Activated T-helper 1 cell treated with anti-CD3 and anti-CD28 coated beads, Interleukin-12 subunit alpha, Interleukin-12 subunit beta, Interleukin-2, Interleukin-4 antibody, amounts not matched to agents 30 ng/mL and 10 ng/mL and 1 ng/mL, durations not matched to agents 14 hours and 24 hours and 36 hours (primary cell): ENCODE measurements at regions of chr2 and their contacts with region 1.

Region 1: GRCh38 chr2:131105156-131105949 is at the start of gene PLEKHB2:
- DNase-seq: peak; percentile 96
- H3K4me3 Mint-ChIP-seq: peak within 1 kb of the TSS; percentile 97
- H3K27ac Mint-ChIP-seq: peak within 1 kb of the TSS; percentile 100
- H3K4me1 Mint-ChIP-seq: peaks cover 35% of the 10 kb centered on the region
- H3K27me3 Mint-ChIP-seq: no peaks in the 10 kb centered on the region
- total RNA-seq, gene PLEKHB2: 72.5 and 73.9 TPM in 2 replicates

Region 2: DNA sequence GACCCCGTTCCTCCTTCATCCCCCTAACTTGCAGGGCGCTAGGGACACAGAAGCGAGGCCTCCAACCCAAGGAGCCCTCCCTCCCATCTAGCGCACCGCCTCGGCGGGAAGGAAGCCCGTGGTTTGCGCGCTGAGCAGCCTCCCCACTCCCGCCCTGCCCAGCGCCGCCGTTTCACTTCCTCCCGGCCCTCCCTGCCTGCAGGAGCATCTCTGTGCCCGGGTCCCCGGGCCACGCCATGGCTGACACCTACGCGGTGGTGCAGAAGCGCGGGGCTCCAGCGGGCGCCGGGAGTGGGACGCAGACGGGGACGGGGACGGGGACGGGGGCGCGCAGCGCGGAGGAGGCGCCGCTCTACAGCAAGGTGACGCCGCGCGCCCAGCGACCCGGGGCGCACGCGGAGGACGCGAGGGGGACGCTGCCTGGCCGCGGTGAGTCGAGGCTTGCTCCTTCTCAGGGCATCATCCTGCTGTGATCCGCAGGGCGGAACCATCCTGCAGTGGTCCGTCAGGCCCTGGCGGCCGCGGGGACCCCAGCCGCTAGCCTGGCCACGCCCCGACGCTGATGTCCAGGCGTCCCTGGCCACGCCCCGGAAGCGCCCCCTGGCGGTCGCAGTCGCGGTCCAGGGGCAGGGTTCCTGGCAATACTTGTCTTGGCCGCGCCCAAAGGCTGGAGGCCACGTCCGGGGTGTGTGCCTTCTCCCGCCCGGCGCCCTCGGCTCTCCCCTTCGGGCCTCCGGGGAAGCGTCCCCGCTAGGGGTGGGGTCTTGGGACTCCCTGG is 733.1 kb before region 1 on chr2:
- intact Hi-C with region 1: loop called (anchors 10 kb)
- DNase-seq: peak; percentile 78
- H3K4me3 Mint-ChIP-seq: peak overlapping the region; percentile 96
- H3K27ac Mint-ChIP-seq: peak overlapping the region; percentile 96
- H3K4me1 Mint-ChIP-seq: peaks cover 59% of the 10 kb centered on the region
- H3K27me3 Mint-ChIP-seq: peaks cover 4% of the 10 kb centered on the region

Region 3: GRCh38 chr2:130759910-130760753 is 345.2 kb before region 1 on chr2:
- intact Hi-C with region 1: no loop called
- DNase-seq: no peak
- H3K4me3 Mint-ChIP-seq: no peak overlapping the region
- H3K27ac Mint-ChIP-seq: no peak overlapping the region
- H3K4me1 Mint-ChIP-seq: no peaks in the 10 kb centered on the region
- H3K27me3 Mint-ChIP-seq: peaks cover 27% of the 10 kb centered on the region

Region 4: DNA sequence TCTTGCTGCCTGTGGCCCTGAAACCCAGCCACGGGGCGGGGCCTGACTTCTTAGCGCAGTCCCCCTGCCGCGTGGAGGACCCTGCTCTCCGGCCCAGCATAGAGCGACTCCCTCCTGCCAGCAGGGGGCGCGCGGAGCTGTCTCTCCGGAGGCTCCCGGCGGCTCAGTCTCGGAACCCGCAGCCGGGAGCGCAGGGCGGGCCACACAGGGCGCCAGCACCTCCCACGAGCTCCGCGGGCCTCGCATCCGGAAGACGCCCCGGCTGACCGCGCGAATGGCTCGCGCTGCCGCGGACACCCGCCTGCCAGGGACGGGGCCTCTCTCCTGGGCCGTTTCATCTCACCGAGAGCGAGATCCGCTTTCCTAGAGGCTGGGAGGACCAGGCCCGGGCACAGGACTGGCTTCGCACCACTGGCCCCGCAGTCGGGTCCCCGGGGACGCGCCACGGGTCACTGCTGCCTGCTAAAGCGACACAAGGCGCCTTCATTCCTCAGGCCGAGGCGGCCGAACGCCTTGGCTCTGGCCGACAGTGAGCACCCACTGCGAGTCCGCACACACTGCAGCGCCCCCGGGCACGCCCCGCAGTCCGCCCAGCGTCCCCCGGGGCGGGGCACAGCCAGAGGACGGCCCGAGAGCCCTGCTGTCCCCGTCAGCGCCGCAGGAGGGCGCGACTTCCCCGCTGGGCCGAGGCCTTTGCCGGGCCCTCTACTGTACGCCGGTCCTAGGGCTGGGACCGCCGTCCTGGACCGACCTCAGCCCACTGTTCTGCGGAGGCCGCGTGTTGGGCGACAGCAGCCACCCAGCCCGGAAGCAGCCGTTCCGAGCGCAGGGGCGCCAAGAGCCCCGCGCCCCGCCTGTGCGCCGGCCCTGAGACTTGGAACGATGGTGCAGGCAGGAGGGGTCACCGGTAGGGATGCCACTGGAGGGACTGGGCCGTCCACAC is 307.6 kb before region 1 on chr2:
- intact Hi-C with region 1: loop called (anchors 2 kb)
- DNase-seq: peak; percentile 89
- H3K4me3 Mint-ChIP-seq: peak overlapping the region; percentile 73
- H3K27ac Mint-ChIP-seq: no peak overlapping the region
- H3K4me1 Mint-ChIP-seq: no peaks in the 10 kb centered on the region
- H3K27me3 Mint-ChIP-seq: peaks cover 24% of the 10 kb centered on the region

Region 5: GRCh38 chr2:130972410-130972809 is 132.9 kb before region 1 on chr2:
- intact Hi-C with region 1: loop called (anchors 5 kb)
- DNase-seq: peak; percentile 16
- H3K4me3 Mint-ChIP-seq: no peak overlapping the region
- H3K27ac Mint-ChIP-seq: peak overlapping the region; percentile 57
- H3K4me1 Mint-ChIP-seq: peaks cover 16% of the 10 kb centered on the region
- H3K27me3 Mint-ChIP-seq: peaks cover 13% of the 10 kb centered on the region

Region 6: DNA sequence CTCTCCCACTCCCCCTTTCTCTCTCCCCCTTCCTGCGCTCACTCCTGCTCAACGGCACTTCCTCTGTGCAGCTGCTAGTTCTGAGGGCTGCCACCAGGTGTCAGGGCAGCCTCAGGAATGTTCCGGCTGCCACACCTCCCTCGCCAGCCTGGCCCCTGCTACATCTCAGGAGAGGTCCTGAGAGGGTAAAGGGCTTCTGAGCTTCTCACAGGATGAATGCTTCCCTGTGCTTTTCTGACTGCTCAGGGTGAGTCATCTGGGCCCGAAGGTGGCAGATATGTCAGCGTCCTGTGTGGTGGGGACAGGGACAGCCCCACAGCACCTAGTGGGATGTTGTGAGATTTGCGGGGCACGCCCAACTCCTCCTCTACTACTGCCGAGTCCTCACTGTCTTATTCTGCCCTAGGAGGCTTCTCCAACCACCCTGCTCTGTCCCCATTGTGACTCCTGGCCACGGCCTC is 48.7 kb after region 1 on chr2:
- intact Hi-C with region 1: loop called (anchors 1 kb)
- DNase-seq: peak; percentile 58
- H3K4me3 Mint-ChIP-seq: no peak overlapping the region
- H3K27ac Mint-ChIP-seq: no peak overlapping the region
- H3K4me1 Mint-ChIP-seq: peaks cover 32% of the 10 kb centered on the region
- H3K27me3 Mint-ChIP-seq: no peaks in the 10 kb centered on the region

Region 7: DNA sequence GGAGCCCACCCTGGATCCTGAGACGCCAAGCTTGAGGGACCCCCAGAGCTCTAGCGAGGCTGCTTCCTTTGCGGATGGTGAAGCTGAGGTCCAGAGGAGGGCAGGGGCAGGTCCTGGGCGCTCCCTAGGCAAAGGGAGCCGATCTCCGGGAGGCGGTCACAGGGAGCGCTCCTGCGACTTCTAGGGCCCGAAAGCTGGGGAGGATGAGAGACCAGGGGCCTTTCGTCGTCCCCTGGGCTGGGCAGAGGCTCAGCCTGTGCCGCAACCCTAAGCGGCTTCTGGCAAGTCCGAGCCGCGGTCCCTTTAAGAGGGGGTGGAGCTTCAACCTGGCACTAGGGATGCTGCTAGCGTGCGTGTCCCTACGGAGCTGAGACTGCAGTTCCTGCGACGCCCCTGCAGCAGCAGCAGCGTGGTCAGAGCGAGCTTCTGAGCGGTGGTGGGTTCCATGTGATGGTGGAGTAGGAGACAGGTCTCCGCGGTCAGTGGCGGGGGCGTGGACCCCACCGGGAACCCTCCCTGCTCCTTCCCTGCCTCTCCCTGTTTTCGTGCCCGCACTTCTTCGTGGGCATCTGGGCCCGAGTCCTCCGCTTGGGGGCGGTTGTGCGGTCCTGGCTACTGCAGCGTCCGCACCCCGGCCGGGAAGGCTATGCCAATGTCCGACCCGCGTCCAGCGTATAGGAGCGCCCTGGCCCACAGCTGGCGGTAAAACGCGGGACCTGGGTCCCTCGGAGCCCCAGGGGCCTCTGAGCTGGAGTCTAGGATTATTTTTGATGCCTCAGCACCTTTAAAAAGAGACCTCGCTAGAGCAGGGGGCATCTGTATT is 577.0 kb after region 1 on chr2:
- intact Hi-C with region 1: loop called (anchors 2 kb)
- DNase-seq: peak; percentile 66
- H3K4me3 Mint-ChIP-seq: peak overlapping the region; percentile 90
- H3K27ac Mint-ChIP-seq: peak overlapping the region; percentile 76
- H3K4me1 Mint-ChIP-seq: peaks cover 42% of the 10 kb centered on the region
- H3K27me3 Mint-ChIP-seq: peaks cover 2% of the 10 kb centered on the region